PC-9 (cell line): ENCODE measurements at regions of chr1 and their contacts with region 1.

Region 1: GRCh38 chr1:205199090-205199930 is 12.2 kb downstream of the DSTYK start:
- DNase-seq: no peak
- H3K4me3 ChIP-seq: no peak overlapping the region
- H3K27ac ChIP-seq: no peak overlapping the region
- H3K4me1 ChIP-seq: no peaks in the 10 kb centered on the region
- H3K27me3 ChIP-seq: no peaks in the 10 kb centered on the region
- CTCF ChIP-seq: no peak

Region 2: GRCh38 chr1:207128336-207128921 is 1929.1 kb after region 1 on chr1:
- CTCF ChIA-PET with region 1: no interaction called
- POLR2A ChIA-PET with region 1: interaction called, 11 read pairs
- intact Hi-C with region 1: no loop called
- DNase-seq: no peak
- H3K4me3 ChIP-seq: no peak overlapping the region
- H3K27ac ChIP-seq: no peak overlapping the region
- H3K4me1 ChIP-seq: no peaks in the 10 kb centered on the region
- H3K27me3 ChIP-seq: no peaks in the 10 kb centered on the region
- CTCF ChIP-seq: no peak